ENCODE measurements at regions of chr19 and their contacts with region 1.

Region 1: DNA sequence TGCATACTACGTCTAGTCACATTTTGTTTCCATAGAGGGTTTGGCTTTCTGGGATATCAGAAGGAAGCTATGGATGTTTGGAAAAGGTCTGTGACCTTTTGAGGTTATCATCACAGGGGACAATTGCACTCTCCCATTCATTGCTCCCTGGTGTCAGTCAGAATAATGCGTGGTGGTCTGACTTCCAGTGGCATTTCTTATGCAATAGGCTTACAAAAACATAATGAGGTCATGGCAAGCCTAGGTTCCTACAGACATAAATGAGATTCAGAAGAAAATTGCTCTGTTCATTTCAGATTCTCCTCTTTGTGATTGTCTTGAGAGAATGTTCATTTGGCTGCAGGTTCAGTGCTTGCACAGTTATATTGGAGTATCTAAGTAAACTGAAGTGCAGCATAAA is 54.6 kb downstream of the ARHGAP35 start:
- H3K4me3 ChIP-seq: no peak overlapping the region
- H3K27ac ChIP-seq: no peak overlapping the region
- H3K4me1 ChIP-seq: peaks cover 32% of the 10 kb centered on the region
- CTCF ChIP-seq: no peak

Region 2: DNA sequence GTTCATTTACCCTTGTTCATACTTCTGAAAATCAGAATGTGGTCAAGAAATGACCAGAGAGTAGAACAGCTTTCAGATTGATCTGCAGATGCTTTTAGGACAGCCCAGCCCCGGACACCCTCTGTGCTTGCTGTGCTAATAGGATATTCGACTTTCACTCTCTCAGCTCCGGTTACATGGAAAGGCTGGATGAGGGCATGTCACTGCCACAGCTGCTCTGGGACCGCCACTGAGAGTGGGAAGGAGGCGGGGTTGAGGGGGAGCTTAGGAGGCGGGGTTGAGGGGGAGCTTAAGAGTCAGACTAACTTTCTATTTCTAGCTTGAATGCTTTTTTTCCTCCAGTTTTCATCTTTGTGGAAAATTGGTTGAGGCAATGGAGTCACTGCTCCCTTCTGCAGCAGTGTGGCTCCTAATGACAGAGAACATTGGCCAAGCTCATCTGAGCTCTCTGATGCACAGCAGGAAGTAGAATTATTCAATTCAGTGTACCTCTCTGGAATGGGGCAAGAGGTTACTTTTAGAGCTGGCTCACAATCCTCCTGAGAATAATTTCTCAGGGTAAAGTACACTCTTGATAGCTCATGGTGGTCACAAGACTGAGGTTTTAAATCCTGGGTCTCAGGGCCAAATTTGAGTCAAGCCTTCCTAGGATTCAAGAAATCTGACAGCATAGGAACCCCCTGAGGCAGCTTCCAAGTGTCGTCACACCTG is 29.7 kb after region 1 on chr19:
- CTCF ChIA-PET with region 1: no interaction called
- POLR2A ChIA-PET with region 1: interaction called, 11 read pairs
- H3K4me3 ChIP-seq: no peak overlapping the region
- H3K27ac ChIP-seq: peak overlapping the region; percentile 48
- H3K4me1 ChIP-seq: peaks cover 22% of the 10 kb centered on the region
- CTCF ChIP-seq: no peak